HEK293 (cell line): ENCODE measurements at regions of chr15 and their contacts with region 1.

Region 1: GRCh38 chr15:90902040-90902839 is 862 bp upstream of the MAN2A2 start:
- H3K4me3 ChIP-seq: peak overlapping the region; percentile 74
- H3K27ac ChIP-seq: peak overlapping the region; percentile 98
- H3K4me1 ChIP-seq: peaks cover 13% of the 10 kb centered on the region
- CTCF ChIP-seq: peak; percentile 97

Region 2: GRCh38 chr15:90915216-90915807 is 13.1 kb after region 1 on chr15:
- CTCF ChIA-PET with region 1: interaction called, 7 read pairs
- POLR2A ChIA-PET with region 1: interaction called, 10 read pairs
- H3K4me3 ChIP-seq: no peak overlapping the region
- H3K27ac ChIP-seq: no peak overlapping the region
- H3K4me1 ChIP-seq: no peaks in the 10 kb centered on the region
- CTCF ChIP-seq: no peak

Region 3: DNA sequence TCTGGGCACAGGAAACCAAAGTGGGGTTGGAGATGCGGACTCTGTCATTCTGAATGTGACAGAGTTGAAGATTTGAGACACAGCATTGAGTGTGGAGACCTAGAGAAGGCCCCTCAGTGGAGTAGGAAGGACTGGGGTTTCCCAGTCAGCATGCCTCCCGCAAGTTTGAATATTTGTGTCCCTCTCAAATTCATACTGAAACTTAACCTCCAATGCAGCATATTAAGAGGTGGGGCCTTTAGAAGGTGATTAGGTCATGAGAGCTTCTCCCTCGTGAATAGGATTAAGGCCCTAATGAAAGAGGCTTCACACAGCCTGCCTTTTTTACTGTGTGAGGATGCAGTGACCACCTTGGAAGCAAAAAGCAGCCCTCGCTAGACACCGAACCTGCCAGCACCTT is 22.1 kb after region 1 on chr15:
- CTCF ChIA-PET with region 1: interaction called, 7 read pairs
- POLR2A ChIA-PET with region 1: interaction called, 88 read pairs
- H3K4me3 ChIP-seq: no peak overlapping the region
- H3K27ac ChIP-seq: no peak overlapping the region
- H3K4me1 ChIP-seq: no peaks in the 10 kb centered on the region
- CTCF ChIP-seq: no peak

Region 4: DNA sequence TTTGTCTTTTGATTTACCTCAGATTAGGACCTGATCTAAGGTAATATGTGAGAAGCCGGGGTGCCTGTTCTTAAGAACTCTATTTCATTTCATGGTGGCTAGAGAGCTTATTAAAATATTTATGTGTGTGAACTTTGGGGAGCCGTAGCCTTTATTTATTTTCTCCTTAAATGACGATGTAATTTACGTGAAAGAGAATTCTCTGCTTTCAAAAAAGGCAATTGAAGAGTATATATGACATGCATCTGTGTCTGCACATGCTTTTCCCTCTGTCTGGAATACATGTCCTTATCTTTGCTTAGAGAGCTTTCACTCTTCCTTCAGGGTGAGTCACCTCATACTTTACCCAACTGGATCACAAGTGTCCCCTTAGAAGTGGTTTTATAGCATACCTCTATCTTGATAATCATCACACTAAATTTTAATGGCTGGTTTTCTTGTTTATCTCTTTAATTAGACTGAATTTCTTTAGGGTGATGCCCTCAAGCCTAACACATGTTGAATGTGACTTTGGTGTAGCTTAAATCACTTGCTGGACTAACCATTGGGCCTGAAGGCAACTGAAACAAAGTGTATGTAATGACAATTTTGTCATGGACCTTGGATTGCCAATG is 376.7 kb after region 1 on chr15:
- CTCF ChIA-PET with region 1: no interaction called
- POLR2A ChIA-PET with region 1: no interaction called
- H3K4me3 ChIP-seq: no peak overlapping the region
- H3K27ac ChIP-seq: no peak overlapping the region
- H3K4me1 ChIP-seq: no peaks in the 10 kb centered on the region
- CTCF ChIP-seq: no peak